WTC11 (cell line): ENCODE measurements at regions of chr5 and their contacts with region 1.

Region 1: GRCh38 chr5:172714491-172715421 is 56.2 kb downstream of the DUSP1 start:
- DNase-seq: peak; percentile 85
- ATAC-seq: peak; percentile 80
- H3K4me3 Mint-ChIP-seq: no peak overlapping the region
- H3K27ac Mint-ChIP-seq: no peak overlapping the region
- H3K4me1 Mint-ChIP-seq: peaks cover 2% of the 10 kb centered on the region; the same call in 1 of the 2 replicates
- H3K27me3 Mint-ChIP-seq: peaks cover 13% of the 10 kb centered on the region
- CTCF ChIP-seq: peak; percentile 87

Region 2: GRCh38 chr5:172666251-172666650 is 48.5 kb before region 1 on chr5:
- CTCF ChIA-PET with region 1: interaction called, 12 read pairs
- POLR2A ChIA-PET with region 1: no interaction called
- DNase-seq: peak; percentile 55
- ATAC-seq: peak; percentile 90
- H3K4me3 Mint-ChIP-seq: no peak overlapping the region
- H3K27ac Mint-ChIP-seq: peak overlapping the region; percentile 48; the same call in 1 of the 2 replicates
- H3K4me1 Mint-ChIP-seq: peaks cover 2% of the 10 kb centered on the region
- H3K27me3 Mint-ChIP-seq: no peaks in the 10 kb centered on the region
- CTCF ChIP-seq: no peak

Region 3: DNA sequence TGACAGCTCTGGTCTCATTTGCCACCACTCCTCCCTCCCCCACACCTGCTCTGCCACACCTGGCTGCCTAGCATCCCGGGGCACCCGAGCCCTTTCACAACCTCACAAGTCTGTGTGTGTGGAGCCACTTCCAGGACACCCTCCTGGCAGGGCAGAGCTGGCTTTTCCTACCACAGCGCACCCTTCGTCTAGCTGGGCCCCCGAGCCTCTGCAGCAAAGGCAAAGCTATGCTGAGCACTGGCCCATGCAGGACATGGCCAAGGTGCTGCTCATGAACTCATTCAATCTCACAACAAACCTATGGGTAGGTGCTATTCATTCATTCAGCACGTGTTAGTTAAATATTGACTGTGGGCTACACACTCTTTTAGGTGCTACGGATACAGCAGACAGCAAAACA is 12.8 kb after region 1 on chr5:
- CTCF ChIA-PET with region 1: interaction called, 21 read pairs
- POLR2A ChIA-PET with region 1: no interaction called
- DNase-seq: no peak
- ATAC-seq: no peak
- H3K4me3 Mint-ChIP-seq: no peak overlapping the region
- H3K27ac Mint-ChIP-seq: no peak overlapping the region
- H3K4me1 Mint-ChIP-seq: 0 out of 2 replicates have a peak, but pooled peaks cover 2% of the 10 kb centered on the region
- H3K27me3 Mint-ChIP-seq: peaks cover 7% of the 10 kb centered on the region; the same call in 1 of the 2 replicates
- CTCF ChIP-seq: no peak

Region 4: DNA sequence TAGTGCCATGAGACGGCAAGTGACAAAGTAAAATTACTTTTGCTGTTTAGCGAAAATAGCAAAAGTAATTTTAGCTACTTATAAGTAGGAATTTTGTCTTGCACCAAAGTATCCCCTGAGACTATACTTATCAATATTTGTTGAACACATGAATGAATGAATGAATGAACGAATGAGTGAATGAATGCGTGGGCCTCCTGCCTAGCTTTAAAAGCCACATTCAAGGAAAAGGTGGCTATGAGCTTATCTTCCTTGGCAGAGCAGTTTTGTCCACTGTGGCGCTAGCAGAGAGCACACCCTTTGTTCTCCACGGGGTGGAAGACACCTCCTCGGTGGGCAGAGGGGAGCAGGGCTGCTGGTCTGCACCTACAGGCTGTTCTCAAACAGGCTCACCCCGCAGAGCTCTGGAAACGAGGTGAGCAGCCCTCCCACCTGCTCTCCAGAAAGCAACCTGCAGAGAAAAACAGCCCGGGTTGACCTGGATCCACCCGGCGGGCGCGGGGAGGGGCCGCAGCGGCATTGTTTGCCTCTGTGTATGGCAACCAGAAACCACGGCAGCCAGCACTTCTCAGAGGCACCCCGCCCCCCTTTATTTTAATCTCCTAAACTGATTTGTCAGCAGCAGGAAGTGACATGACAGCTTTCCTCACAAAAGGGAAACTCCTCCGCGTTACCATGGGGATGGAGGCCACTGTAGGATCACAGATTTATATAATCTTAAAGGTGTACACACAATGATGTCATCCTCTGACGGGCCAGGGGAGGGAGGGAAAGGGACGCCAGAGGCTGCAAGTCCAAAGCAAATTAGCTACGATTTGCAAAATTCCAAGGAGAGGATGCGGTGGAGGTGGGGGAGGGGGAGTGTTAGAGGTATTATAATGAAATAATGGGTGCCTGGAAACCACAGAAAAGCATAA is 50.4 kb after region 1 on chr5:
- CTCF ChIA-PET with region 1: interaction called, 72 read pairs
- POLR2A ChIA-PET with region 1: interaction called, 11 read pairs
- DNase-seq: peak; percentile 92
- ATAC-seq: peak; percentile 90
- H3K4me3 Mint-ChIP-seq: peak overlapping the region; percentile 79
- H3K27ac Mint-ChIP-seq: peak overlapping the region; percentile 98
- H3K4me1 Mint-ChIP-seq: peaks cover 30% of the 10 kb centered on the region
- H3K27me3 Mint-ChIP-seq: peaks cover 8% of the 10 kb centered on the region
- CTCF ChIP-seq: no peak

Region 5: DNA sequence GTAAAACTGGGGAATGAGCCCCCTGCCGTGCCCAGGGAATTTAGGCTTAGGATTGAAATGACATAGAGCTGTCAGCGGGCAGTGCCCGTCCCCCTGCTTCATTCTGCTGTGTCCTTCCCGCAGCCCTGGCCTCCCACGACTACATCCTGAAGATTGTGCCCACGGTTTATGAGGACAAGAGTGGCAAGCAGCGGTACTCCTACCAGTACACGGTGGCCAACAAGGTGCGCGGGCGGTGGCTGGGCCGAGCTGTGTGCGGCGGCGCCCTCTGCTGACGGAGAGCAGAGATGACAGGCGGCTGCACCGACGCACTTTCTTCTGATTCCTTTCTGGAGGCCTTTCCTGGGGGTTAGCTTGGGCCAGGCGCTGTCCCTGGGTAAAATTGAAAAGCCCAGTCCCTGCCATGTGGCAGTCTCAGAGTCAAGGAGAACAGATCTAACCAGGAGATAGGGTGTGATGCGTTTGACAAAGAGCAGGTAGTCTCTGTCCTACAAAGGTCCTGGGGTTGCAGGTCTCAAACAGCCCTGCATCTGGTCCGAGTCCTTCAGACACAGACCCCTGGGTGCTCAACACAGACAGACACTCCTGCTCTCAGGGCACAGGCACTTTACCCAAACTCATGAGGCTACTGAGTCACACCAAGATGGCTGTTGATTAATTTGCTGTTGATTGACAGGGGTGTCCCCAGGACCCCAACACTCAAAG is 217.7 kb after region 1 on chr5:
- CTCF ChIA-PET with region 1: interaction called, 50 read pairs
- POLR2A ChIA-PET with region 1: no interaction called
- DNase-seq: peak; percentile 66
- ATAC-seq: peak; percentile 92
- H3K4me3 Mint-ChIP-seq: no peak overlapping the region
- H3K27ac Mint-ChIP-seq: no peak overlapping the region
- H3K4me1 Mint-ChIP-seq: no peaks in the 10 kb centered on the region
- H3K27me3 Mint-ChIP-seq: no peaks in the 10 kb centered on the region
- CTCF ChIP-seq: peak; percentile 90

Region 6: GRCh38 chr5:172984243-172984953 is 269.6 kb after region 1 on chr5:
- CTCF ChIA-PET with region 1: interaction called, 16 read pairs
- POLR2A ChIA-PET with region 1: no interaction called
- DNase-seq: peak; percentile 68
- ATAC-seq: peak; percentile 73
- H3K4me3 Mint-ChIP-seq: peak overlapping the region; percentile 98
- H3K27ac Mint-ChIP-seq: peak overlapping the region; percentile 97
- H3K4me1 Mint-ChIP-seq: peaks cover 9% of the 10 kb centered on the region
- H3K27me3 Mint-ChIP-seq: peaks cover 3% of the 10 kb centered on the region; the same call in 1 of the 2 replicates
- CTCF ChIP-seq: no peak